ENCODE measurements at regions of chr1 and their contacts with region 1.

Region 1: DNA sequence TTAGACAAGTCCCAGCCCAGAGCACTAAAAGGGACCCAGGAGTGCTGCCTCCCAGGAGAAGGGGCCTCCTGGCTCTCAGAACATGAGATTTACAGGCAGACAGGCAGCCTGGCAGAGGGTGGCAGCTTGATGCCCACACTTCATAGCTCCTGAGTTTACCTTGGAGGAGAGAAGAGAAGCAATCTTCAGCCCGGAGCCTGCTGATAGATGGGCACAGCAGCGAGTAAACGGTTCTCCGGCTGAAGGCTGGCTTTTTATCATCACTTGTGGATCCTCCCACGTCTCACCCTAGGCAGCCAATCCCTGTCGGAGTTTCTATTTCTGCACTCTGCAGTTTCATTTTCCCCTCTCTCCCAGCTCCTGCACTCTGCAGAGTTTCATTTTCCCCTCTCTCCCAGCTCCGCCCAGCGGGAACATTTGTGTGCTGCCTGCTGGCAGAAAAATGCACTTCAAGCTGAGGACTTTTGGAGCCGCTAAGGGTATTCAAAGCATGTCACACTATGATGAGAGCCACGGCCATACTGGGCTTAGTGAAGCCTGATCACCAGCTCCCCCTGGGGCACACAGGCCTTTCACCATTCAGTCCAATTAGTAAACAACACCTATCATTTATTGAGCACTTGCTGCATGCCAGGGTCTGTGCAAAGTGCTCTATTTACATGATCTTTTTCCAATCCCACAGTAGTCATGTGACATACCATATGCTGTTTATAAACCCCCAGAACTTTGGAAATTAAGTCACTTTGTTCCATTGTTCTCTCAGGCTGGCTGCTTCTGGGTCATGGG is at the start of gene IFI6:
- DNase-seq: peak; percentile 85 to 96 (median 92)
- H3K4me3 ChIP-seq: peak within 1 kb of the TSS in 3 of 4 donors; percentile 19 to 62 (median 61)
- H3K27ac ChIP-seq: peak within 1 kb of the TSS; percentile 39 to 86 (median 75)
- H3K4me1 ChIP-seq: peaks cover 9 to 33% of the 10 kb centered on the region in 2 donors
- H3K27me3 ChIP-seq: no peaks in the 10 kb centered on the region
- CTCF ChIP-seq: peak; percentile 10 to 78 (median 60)
- POLR2A ChIP-seq: peak; percentile 51 to 67
- total RNA-seq, gene IFI6: 67.6 to 379 (median 146) TPM

Region 2: GRCh38 chr1:27724961-27725373 is 52.8 kb after region 1 on chr1:
- intact Hi-C with region 1: loop called in 1 of 2 experiments (anchors 5 kb)
- DNase-seq: peak in 6 of 7 donors; percentile 13 to 60 (median 30)
- H3K4me3 ChIP-seq: peak overlapping the region in 1 of 4 donors; percentile 67
- H3K27ac ChIP-seq: peak overlapping the region in 4 of 5 donors; percentile 36 to 78 (median 64)
- H3K4me1 ChIP-seq: peaks cover 6 to 16% of the 10 kb centered on the region in 2 donors
- H3K27me3 ChIP-seq: no peaks in the 10 kb centered on the region
- CTCF ChIP-seq: no peak
- POLR2A ChIP-seq: no peak

Region 3: GRCh38 chr1:27804791-27805190 is 132.6 kb after region 1 on chr1:
- intact Hi-C with region 1: no loop called
- DNase-seq: no peak
- H3K4me3 ChIP-seq: no peak overlapping the region
- H3K27ac ChIP-seq: no peak overlapping the region
- H3K4me1 ChIP-seq: no peaks in the 10 kb centered on the region
- H3K27me3 ChIP-seq: no peaks in the 10 kb centered on the region
- CTCF ChIP-seq: no peak
- POLR2A ChIP-seq: no peak

Region 4: DNA sequence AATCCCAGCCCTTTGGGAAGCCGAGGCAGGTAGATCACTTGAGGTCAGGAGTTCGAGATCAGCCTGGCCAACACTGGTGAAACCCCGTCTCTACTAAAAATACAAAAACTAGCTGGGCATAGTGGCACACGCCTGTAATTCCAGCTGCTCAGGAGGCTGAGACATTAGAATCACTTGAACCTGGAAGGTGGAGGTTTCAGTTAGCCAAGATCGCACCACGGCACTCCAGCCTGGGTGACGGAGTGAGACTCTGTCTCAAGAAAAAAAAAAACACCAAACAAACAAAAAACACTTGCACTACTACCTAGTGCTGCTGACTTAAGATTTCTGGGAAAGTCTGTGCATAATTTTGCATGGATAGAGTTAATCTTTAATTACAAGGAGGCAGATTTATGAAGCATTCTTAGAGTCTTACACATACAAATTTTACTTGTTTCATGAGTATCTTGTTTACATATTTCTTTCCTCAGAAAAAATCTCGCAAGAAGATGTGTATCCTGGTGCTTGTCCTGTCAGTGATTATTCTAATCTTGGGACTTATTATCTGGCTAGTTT is 149.7 kb after region 1 on chr1:
- intact Hi-C with region 1: loop called in 1 of 2 experiments (anchors 10 kb)
- DNase-seq: no peak
- H3K4me3 ChIP-seq: no peak overlapping the region
- H3K27ac ChIP-seq: no peak overlapping the region
- H3K4me1 ChIP-seq: peaks cover 3 to 5% of the 10 kb centered on the region in 2 donors
- H3K27me3 ChIP-seq: no peaks in the 10 kb centered on the region
- CTCF ChIP-seq: no peak
- POLR2A ChIP-seq: no peak